ENCODE measurements at regions of chr19 and their contacts with region 1.

Region 1: GRCh38 chr19:2269244-2269947 is 12.6 kb downstream of the PEAK3 start:
- DNase-seq: peak; percentile 98 to 99 (median 99)
- ATAC-seq: peak; percentile 77
- H3K4me3 ChIP-seq: peak overlapping the region; percentile 98
- H3K4me3 Mint-ChIP-seq: peak overlapping the region; percentile 97
- H3K27ac ChIP-seq: peak overlapping the region; percentile 50 to 94
- H3K27ac Mint-ChIP-seq: peak overlapping the region; percentile 97
- H3K4me1 ChIP-seq: peaks cover 50% of the 10 kb centered on the region
- H3K4me1 Mint-ChIP-seq: peaks cover 30% of the 10 kb centered on the region
- H3K27me3 ChIP-seq: peaks cover 0 to 6% of the 10 kb centered on the region in 2 experiments
- H3K27me3 Mint-ChIP-seq: no peaks in the 10 kb centered on the region
- CTCF ChIP-seq: no peak

Region 2: GRCh38 chr19:2016041-2016807 is 253.2 kb before region 1 on chr19:
- CTCF ChIA-PET with region 1: no interaction called
- POLR2A ChIA-PET with region 1: no interaction called
- intact Hi-C with region 1: loop called in 1 of 2 experiments (anchors 2 kb)
- DNase-seq: peak in 12 of 14 experiments; percentile 42 to 86 (median 54)
- ATAC-seq: peak; percentile 63
- H3K4me3 ChIP-seq: peak overlapping the region; percentile 30
- H3K4me3 Mint-ChIP-seq: peak overlapping the region; percentile 76
- H3K27ac ChIP-seq: no peak overlapping the region
- H3K27ac Mint-ChIP-seq: peak overlapping the region; percentile 69
- H3K4me1 ChIP-seq: peaks cover 33% of the 10 kb centered on the region
- H3K4me1 Mint-ChIP-seq: peaks cover 22% of the 10 kb centered on the region
- H3K27me3 ChIP-seq: no peaks in the 10 kb centered on the region
- H3K27me3 Mint-ChIP-seq: no peaks in the 10 kb centered on the region
- CTCF ChIP-seq: no peak

Region 3: GRCh38 chr19:2168619-2169424 is 100.6 kb before region 1 on chr19:
- CTCF ChIA-PET with region 1: no interaction called
- POLR2A ChIA-PET with region 1: no interaction called
- intact Hi-C with region 1: loop called in 1 of 2 experiments (anchors 2 kb)
- DNase-seq: peak in 6 of 14 experiments; percentile 39 to 85 (median 58)
- ATAC-seq: peak; percentile 16
- H3K4me3 ChIP-seq: no peak overlapping the region
- H3K4me3 Mint-ChIP-seq: peak overlapping the region; percentile 54
- H3K27ac ChIP-seq: peak overlapping the region; percentile 13 to 55
- H3K27ac Mint-ChIP-seq: peak overlapping the region; percentile 62
- H3K4me1 ChIP-seq: peaks cover 67% of the 10 kb centered on the region
- H3K4me1 Mint-ChIP-seq: peaks cover 37% of the 10 kb centered on the region
- H3K27me3 ChIP-seq: no peaks in the 10 kb centered on the region
- H3K27me3 Mint-ChIP-seq: no peaks in the 10 kb centered on the region
- CTCF ChIP-seq: no peak

Region 4: DNA sequence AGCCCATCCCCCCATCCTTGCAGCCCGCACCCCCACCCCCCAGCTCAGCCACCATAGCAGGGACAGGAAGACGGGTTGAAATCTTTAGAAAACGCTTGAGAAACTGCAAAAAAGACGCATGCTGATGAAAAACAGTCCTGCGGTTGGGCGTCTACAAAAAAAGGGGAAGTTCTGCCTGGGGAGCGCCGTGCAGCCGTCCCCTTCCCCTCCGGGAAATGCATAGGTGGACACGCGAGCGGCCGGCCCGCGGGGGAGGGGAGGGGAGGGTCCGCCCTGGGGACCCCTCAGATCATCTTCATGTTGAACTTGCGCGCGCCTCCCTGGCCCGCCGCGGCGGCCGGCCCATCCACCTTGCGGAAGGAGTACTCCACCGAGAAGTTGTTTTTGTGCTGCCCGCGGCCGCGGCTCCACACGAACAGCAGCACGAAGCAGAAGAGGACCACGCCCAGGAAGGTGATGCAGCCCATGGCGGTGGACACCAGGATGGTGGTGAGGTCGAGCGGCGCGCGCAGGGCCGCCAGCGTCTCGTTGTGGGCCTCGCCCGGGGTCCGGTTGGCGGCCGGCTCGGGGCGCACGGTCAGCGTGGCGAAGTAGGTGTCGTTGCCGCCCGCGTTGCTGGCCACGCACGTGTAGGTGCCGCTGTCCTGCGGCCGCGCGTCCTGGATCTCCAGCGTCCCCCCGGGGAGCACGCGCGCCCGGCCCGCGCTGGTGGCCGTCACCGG is 20.5 kb after region 1 on chr19:
- CTCF ChIA-PET with region 1: interaction called, 5 read pairs
- POLR2A ChIA-PET with region 1: interaction called, 23 read pairs
- intact Hi-C with region 1: no loop called
- DNase-seq: peak in 13 of 14 experiments; percentile 40 to 83 (median 65)
- ATAC-seq: peak; percentile 72
- H3K4me3 ChIP-seq: peak overlapping the region; percentile 69
- H3K4me3 Mint-ChIP-seq: peak overlapping the region; percentile 83
- H3K27ac ChIP-seq: peak overlapping the region; percentile 44 to 50
- H3K27ac Mint-ChIP-seq: peak overlapping the region; percentile 83
- H3K4me1 ChIP-seq: peaks cover 46% of the 10 kb centered on the region
- H3K4me1 Mint-ChIP-seq: peaks cover 26% of the 10 kb centered on the region
- H3K27me3 ChIP-seq: no peaks in the 10 kb centered on the region
- H3K27me3 Mint-ChIP-seq: no peaks in the 10 kb centered on the region
- CTCF ChIP-seq: no peak

Region 5: GRCh38 chr19:3893509-3894179 is 1624.2 kb after region 1 on chr19:
- CTCF ChIA-PET with region 1: no interaction called
- POLR2A ChIA-PET with region 1: no interaction called
- intact Hi-C with region 1: no loop called
- DNase-seq: no peak
- ATAC-seq: no peak
- H3K4me3 ChIP-seq: no peak overlapping the region
- H3K4me3 Mint-ChIP-seq: no peak overlapping the region
- H3K27ac ChIP-seq: no peak overlapping the region
- H3K27ac Mint-ChIP-seq: no peak overlapping the region
- H3K4me1 ChIP-seq: no peaks in the 10 kb centered on the region
- H3K4me1 Mint-ChIP-seq: no peaks in the 10 kb centered on the region
- H3K27me3 ChIP-seq: no peaks in the 10 kb centered on the region
- H3K27me3 Mint-ChIP-seq: peaks cover 5% of the 10 kb centered on the region
- CTCF ChIP-seq: no peak